ENCODE measurements at regions of chr11 and their contacts with region 1.

Region 1: DNA sequence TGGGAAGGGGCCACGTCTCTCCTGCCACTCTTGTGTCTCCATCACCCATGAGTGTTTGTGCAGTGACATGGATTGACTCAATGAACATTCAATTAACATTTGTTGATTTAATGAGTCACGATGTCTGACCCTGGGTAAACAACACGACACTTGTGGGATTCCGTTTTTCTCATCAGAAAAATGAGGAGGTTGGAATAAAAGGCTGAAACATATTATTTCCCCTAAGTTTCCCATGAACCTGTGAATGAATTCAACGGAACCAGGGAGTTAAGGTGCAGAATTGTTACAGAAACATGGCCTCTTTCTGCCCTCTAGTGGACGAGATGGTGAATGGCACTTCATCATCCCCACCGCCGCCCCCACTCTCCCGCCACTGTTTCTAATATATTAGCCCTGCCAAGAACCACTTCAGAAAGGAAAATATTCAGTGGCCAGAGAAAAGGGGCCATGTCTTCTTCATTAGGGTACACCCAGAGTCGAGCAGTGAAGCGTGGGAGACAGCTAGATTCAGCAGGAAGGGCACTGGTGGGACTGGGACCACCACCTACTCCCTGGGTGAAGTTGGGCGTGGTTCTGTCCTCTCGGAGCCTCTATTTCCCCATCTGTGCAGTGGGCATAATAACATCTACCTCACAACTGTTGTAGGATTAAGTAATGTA is 46.3 kb upstream of the SYT13 start:
- DNase-seq: peak; percentile 74
- H3K4me3 Mint-ChIP-seq: no peak overlapping the region
- H3K27ac Mint-ChIP-seq: no peak overlapping the region
- H3K4me1 Mint-ChIP-seq: no peaks in the 10 kb centered on the region
- H3K27me3 Mint-ChIP-seq: peaks cover 10% of the 10 kb centered on the region

Region 2: DNA sequence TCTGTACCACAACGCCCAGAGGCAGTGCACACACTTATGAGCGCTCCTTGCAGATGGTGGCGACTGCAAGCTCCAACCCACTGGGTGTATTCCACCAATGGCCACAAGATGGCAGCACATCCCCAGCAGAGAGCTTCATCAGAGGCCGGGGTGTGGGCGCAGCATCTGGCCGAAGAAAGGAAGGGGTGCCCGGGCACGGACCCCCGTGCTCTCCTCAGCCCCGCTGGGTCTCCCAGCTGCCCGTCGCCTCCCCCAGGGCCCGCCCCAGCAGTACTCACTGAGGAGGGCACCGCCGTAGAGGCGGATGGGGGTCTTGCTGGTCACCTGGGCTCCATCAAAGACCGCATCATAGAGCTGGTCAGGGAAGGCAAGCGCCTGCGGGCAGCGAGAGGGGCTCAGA is 395.9 kb before region 1 on chr11:
- intact Hi-C with region 1: loop called (anchors 5 kb)
- DNase-seq: peak; percentile 94
- H3K4me3 Mint-ChIP-seq: no peak overlapping the region
- H3K27ac Mint-ChIP-seq: no peak overlapping the region
- H3K4me1 Mint-ChIP-seq: no peaks in the 10 kb centered on the region
- H3K27me3 Mint-ChIP-seq: no peaks in the 10 kb centered on the region

Region 3: DNA sequence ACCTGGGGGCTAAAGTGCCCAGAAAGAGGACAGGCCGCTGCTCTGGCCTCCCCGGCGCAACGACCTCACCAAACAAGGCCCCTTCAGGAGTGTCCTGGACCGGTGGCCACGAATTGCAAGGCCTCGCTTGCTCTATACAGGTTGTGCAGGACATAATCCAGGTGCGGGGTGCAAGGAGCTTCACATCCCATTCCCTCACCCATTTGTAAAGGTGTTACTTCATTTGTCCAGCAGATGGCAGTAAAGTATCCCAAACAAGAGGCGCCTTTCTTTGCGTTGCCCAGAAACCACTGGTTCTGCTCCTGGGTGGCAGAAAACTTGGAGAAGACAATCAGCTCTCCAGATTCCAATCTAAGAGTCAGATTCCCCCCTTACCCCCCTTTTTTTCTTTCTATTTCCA is 221.8 kb before region 1 on chr11:
- intact Hi-C with region 1: loop called (anchors 1 kb)
- DNase-seq: peak; percentile 86
- H3K4me3 Mint-ChIP-seq: no peak overlapping the region
- H3K27ac Mint-ChIP-seq: no peak overlapping the region
- H3K4me1 Mint-ChIP-seq: no peaks in the 10 kb centered on the region
- H3K27me3 Mint-ChIP-seq: peaks cover 24% of the 10 kb centered on the region

Region 4: GRCh38 chr11:45371251-45372115 is 39.1 kb after region 1 on chr11:
- intact Hi-C with region 1: no loop called
- DNase-seq: peak; percentile 87
- H3K4me3 Mint-ChIP-seq: no peak overlapping the region
- H3K27ac Mint-ChIP-seq: no peak overlapping the region
- H3K4me1 Mint-ChIP-seq: peaks cover 9% of the 10 kb centered on the region
- H3K27me3 Mint-ChIP-seq: peaks cover 25% of the 10 kb centered on the region

Region 5: GRCh38 chr11:45556851-45557707 is 224.7 kb after region 1 on chr11:
- intact Hi-C with region 1: no loop called
- DNase-seq: no peak
- H3K4me3 Mint-ChIP-seq: no peak overlapping the region
- H3K27ac Mint-ChIP-seq: no peak overlapping the region
- H3K4me1 Mint-ChIP-seq: no peaks in the 10 kb centered on the region
- H3K27me3 Mint-ChIP-seq: peaks cover 3% of the 10 kb centered on the region

Measured in activated CD4-positive, alpha-beta T cell treated with anti-CD3 and anti-CD28 coated beads, Interleukin-2, amount 10 ng/mL, durations not matched to agents 24 days and 14 days (primary cell).